Spleen (tissue), 13 donors: ENCODE measurements at regions of chr13 and their contacts with region 1.

Region 1: DNA sequence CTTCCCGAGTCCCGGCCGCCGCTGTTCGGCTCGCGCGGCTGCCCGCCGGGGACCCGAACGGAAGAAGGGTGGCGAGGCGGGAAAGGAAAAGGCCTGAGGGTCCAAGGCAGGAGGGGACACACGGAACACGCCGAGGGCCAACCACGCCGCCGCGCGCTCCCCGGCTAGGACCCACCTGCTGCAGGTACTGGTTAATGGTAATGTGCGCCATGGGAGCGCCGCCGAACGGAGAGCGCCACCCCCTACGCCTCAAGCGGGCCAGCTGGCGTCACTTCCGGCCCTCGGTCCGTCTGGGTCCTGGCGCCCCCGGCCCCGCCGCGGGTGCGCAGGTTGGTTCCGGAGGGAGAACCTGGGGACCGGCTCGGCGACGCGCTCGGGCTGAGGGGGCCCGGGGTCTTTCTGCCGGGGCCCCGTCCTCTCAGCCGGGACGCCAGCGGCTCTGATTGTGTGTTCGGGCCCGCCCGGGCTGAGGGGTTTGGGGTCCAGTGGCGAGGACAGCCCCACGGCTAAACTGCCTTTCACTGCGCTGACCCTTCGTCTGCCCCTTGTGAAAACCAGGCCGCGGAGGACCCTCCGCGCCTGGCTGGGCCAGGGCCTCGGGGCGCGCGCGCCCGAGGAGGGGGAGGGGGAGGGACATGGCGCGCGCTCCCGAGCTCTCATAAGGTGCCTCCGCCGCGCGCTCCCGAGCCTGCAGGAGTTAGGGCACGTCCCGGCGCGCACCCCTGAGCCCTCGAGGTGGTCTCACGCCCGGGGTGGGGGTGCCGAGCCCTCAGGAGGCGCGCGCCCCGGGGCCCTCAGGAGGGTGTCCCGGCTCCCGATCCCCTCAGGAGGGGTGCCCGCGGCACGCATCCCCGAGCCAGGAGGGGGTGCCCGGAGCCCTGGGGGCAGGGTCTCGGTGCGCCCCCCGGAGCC is at the start of gene PCID2:
- DNase-seq: peak; percentile 98
- H3K4me3 ChIP-seq: peak within 1 kb of the TSS; percentile 86 to 98 (median 96)
- H3K27ac ChIP-seq: peak within 1 kb of the TSS; percentile 85 to 99 (median 98)
- H3K4me1 ChIP-seq: peaks cover 38 to 84% (median 76%) of the 10 kb centered on the region in 6 donors
- H3K27me3 ChIP-seq: no peaks in the 10 kb centered on the region
- CTCF ChIP-seq: peak in 3 of 11 experiments; percentile 21 to 35 (median 24)
- POLR2A ChIP-seq: peak in 2 of 3 donors; percentile 23 to 47
- total RNA-seq, gene PCID2: 38.4 to 71.0 (median 49.9) TPM

Region 2: GRCh38 chr13:113069861-113070805 is 138.5 kb before region 1 on chr13:
- intact Hi-C with region 1: no loop called
- DNase-seq: peak; percentile 32
- H3K4me3 ChIP-seq: no peak overlapping the region
- H3K27ac ChIP-seq: no peak overlapping the region
- H3K4me1 ChIP-seq: no peaks in the 10 kb centered on the region
- H3K27me3 ChIP-seq: no peaks in the 10 kb centered on the region
- CTCF ChIP-seq: no peak
- POLR2A ChIP-seq: no peak

Region 3: GRCh38 chr13:113153810-113154748 is 54.6 kb before region 1 on chr13:
- intact Hi-C with region 1: loop called (anchors 10 kb)
- DNase-seq: peak; percentile 92
- H3K4me3 ChIP-seq: peak overlapping the region; percentile 10 to 63 (median 40)
- H3K27ac ChIP-seq: peak overlapping the region; percentile 32 to 79 (median 70)
- H3K4me1 ChIP-seq: peaks cover 7 to 29% (median 19%) of the 10 kb centered on the region in 6 donors
- H3K27me3 ChIP-seq: peaks cover 0 to 51% (median 0%) of the 10 kb centered on the region in 7 donors
- CTCF ChIP-seq: no peak
- POLR2A ChIP-seq: no peak